Activated CD8-positive, alpha-beta T cell treated with anti-CD3 and anti-CD28 coated beads, Interleukin-2, amount 10 ng/mL, durations not matched to agents 7 days and 5 days (primary cell): ENCODE measurements at regions of chr19 and their contacts with region 1.

Region 1: DNA sequence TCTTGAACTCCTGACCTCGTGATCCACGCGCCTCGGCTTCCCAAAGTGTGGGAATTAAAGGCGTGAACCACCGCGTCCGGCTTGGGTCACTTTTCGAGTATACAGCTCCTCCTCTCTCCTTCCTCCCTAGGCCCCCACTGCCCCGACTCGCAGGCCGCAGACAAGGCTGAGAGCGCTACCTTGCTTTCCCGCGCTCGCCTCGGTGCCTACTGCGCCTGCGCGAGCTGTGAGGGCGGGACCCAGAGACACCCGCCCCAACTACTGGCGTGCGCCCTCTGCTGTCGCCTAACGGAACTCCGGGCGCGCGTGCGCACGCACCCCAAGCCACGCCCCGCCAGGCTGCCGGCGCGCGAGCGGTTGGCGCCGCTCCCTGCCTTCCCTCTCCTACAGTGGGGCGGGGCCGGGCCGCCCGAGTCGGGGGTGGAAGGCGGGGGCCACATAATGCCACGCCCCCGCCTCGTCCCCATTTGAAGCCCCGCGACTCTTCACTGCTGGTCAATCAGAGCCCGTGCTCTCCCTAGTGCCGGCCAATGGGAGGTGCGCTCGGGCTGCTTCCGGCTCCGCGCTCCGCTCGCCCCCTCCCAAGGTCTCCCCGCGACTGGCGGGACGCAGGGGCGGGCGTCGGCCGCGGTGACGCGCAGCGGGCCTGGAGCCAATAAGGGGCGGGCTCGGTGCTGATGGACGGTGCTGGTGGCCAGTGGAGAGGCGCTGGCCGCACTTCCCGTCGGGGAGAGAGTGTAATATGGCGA is at the start of gene RAB8A:
- DNase-seq: peak; percentile 98
- ATAC-seq: peak; percentile 96
- H3K4me3 Mint-ChIP-seq: peak within 1 kb of the TSS; percentile 98
- H3K27ac Mint-ChIP-seq: peak within 1 kb of the TSS; percentile 99
- H3K4me1 Mint-ChIP-seq: peaks cover 39% of the 10 kb centered on the region
- H3K27me3 Mint-ChIP-seq: no peaks in the 10 kb centered on the region
- total RNA-seq, gene RAB8A: 156 to 167 TPM

Region 2: GRCh38 chr19:16070366-16070990 is 40.9 kb before region 1 on chr19:
- CTCF ChIA-PET with region 1: interaction called, 16 read pairs
- POLR2A ChIA-PET with region 1: interaction called, 4 read pairs
- DNase-seq: peak; percentile 92
- ATAC-seq: peak; percentile 95
- H3K4me3 Mint-ChIP-seq: no peak overlapping the region
- H3K27ac Mint-ChIP-seq: no peak overlapping the region
- H3K4me1 Mint-ChIP-seq: peaks cover 51% of the 10 kb centered on the region
- H3K27me3 Mint-ChIP-seq: no peaks in the 10 kb centered on the region

Region 3: GRCh38 chr19:16082556-16082955 is 28.8 kb before region 1 on chr19:
- CTCF ChIA-PET with region 1: interaction called, 19 read pairs
- POLR2A ChIA-PET with region 1: interaction called, 19 read pairs
- DNase-seq: no peak
- ATAC-seq: no peak
- H3K4me3 Mint-ChIP-seq: no peak overlapping the region
- H3K27ac Mint-ChIP-seq: no peak overlapping the region
- H3K4me1 Mint-ChIP-seq: peaks cover 83% of the 10 kb centered on the region
- H3K27me3 Mint-ChIP-seq: no peaks in the 10 kb centered on the region

Region 4: DNA sequence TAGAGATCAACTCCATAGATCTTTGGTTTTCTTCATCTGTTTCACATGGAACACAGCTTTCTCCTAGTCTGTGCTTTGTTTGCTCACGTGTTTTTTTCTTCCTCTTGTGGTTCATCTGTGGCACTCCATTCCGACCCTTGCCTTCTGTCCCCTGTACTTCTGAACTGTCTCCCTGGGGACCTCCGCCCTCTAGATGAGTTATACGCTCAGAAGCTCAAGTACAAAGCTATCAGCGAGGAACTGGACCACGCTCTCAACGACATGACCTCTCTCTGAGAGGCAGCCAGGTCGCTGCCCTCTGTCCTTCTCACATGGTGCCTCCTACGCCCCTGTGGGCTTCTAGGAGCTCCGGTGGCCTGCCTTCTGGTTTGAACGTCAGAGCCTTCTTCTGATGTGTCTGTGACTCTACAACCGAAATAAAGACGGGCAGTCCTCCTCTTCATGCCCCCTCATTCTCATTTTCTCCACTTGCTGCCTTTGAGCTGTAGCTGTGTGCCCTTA is 16.2 kb before region 1 on chr19:
- CTCF ChIA-PET with region 1: interaction called, 15 read pairs
- POLR2A ChIA-PET with region 1: interaction called, 10 read pairs
- DNase-seq: no peak
- ATAC-seq: peak; percentile 65
- H3K4me3 Mint-ChIP-seq: no peak overlapping the region
- H3K27ac Mint-ChIP-seq: peak overlapping the region; percentile 67
- H3K4me1 Mint-ChIP-seq: peaks cover 49% of the 10 kb centered on the region
- H3K27me3 Mint-ChIP-seq: no peaks in the 10 kb centered on the region

Region 5: GRCh38 chr19:16125737-16126495 is 14.6 kb after region 1 on chr19:
- CTCF ChIA-PET with region 1: no interaction called
- POLR2A ChIA-PET with region 1: no interaction called
- DNase-seq: no peak
- ATAC-seq: no peak
- H3K4me3 Mint-ChIP-seq: no peak overlapping the region
- H3K27ac Mint-ChIP-seq: no peak overlapping the region
- H3K4me1 Mint-ChIP-seq: peaks cover 22% of the 10 kb centered on the region
- H3K27me3 Mint-ChIP-seq: no peaks in the 10 kb centered on the region

Region 6: GRCh38 chr19:16175954-16176353 is 64.6 kb after region 1 on chr19:
- CTCF ChIA-PET with region 1: no interaction called
- POLR2A ChIA-PET with region 1: no interaction called
- DNase-seq: no peak
- ATAC-seq: no peak
- H3K4me3 Mint-ChIP-seq: no peak overlapping the region
- H3K27ac Mint-ChIP-seq: no peak overlapping the region
- H3K4me1 Mint-ChIP-seq: peaks cover 9% of the 10 kb centered on the region
- H3K27me3 Mint-ChIP-seq: peaks cover 8% of the 10 kb centered on the region